PC-3 (cell line): ENCODE measurements at regions of chr1 and their contacts with region 1.

Region 1: DNA sequence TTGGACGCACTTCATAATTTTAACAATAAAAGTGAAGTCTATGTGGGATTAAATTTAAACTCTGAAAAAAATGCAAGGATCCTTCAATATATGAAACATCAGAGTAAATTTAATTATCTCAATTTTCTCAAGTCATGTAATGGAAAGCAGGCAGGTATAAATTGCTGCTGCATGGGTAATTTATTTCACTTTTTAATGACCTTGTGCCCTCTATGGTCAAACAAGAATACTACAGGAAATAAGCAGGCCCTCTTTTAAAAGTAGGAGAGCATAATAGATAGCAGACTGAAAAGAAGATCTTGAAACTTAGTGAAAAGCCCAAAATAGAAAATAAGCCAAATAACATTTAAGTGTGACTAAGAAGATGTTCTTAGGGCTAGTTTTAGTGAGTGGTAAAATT is 22.9 kb downstream of the BCAS2 start:
- DNase-seq: peak; percentile 29
- ATAC-seq: peak; percentile 38; the same call in 1 of the 2 replicates
- H3K4me3 ChIP-seq: no peak overlapping the region
- H3K27ac ChIP-seq: no peak overlapping the region
- H3K4me1 ChIP-seq: no peaks in the 10 kb centered on the region
- H3K27me3 ChIP-seq: no peaks in the 10 kb centered on the region
- CTCF ChIP-seq: peak; percentile 63

Region 2: DNA sequence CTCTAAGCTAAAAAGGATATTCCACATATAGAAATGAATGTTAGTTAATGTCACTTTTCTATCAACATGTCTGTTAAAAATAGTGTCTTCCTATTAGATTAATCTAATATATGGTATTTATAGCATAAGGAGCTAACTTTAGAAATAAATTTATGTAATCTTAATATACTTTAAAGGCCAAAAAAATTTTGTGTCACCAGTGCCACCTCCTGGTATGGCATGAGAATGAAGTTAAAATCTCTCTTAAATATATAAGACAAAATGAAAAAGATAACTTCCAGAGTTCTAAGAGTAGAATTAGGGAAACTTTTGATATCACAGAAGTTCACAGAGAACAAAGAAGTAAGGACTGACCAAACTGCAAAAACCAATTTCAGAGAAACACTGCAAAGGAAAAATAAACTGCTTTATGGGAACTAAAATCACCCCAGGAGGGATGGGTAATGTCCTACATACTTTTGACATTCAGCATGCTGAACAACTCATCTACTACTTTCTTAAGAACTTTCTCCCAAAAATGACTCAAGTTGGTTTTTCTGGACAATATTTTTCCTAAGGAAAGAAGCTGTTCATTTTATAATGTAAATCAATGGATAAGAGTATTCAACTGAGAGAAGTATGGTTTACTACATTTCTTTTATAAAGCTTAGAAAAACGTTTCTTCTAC is 130.3 kb before region 1 on chr1:
- CTCF ChIA-PET with region 1: interaction called, 3 read pairs
- POLR2A ChIA-PET with region 1: no interaction called
- intact Hi-C with region 1: loop called (anchors 5 kb)
- DNase-seq: peak; percentile 38
- ATAC-seq: no peak; the same call in 1 of the 2 replicates
- H3K4me3 ChIP-seq: no peak overlapping the region
- H3K27ac ChIP-seq: no peak overlapping the region
- H3K4me1 ChIP-seq: no peaks in the 10 kb centered on the region
- H3K27me3 ChIP-seq: no peaks in the 10 kb centered on the region
- CTCF ChIP-seq: peak; percentile 65

Region 3: GRCh38 chr1:114467488-114467887 is 91.1 kb before region 1 on chr1:
- CTCF ChIA-PET with region 1: no interaction called
- POLR2A ChIA-PET with region 1: no interaction called
- intact Hi-C with region 1: loop called (anchors 10 kb)
- DNase-seq: no peak
- ATAC-seq: no peak
- H3K4me3 ChIP-seq: no peak overlapping the region
- H3K27ac ChIP-seq: no peak overlapping the region
- H3K4me1 ChIP-seq: peaks cover 22% of the 10 kb centered on the region
- H3K27me3 ChIP-seq: no peaks in the 10 kb centered on the region
- CTCF ChIP-seq: no peak

Region 4: GRCh38 chr1:114540202-114540601 is 18.3 kb before region 1 on chr1:
- CTCF ChIA-PET with region 1: no interaction called
- POLR2A ChIA-PET with region 1: no interaction called
- intact Hi-C with region 1: no loop called
- DNase-seq: peak; percentile 35
- ATAC-seq: peak; percentile 68
- H3K4me3 ChIP-seq: no peak overlapping the region
- H3K27ac ChIP-seq: no peak overlapping the region
- H3K4me1 ChIP-seq: peaks cover 8% of the 10 kb centered on the region; the same call in 1 of the 2 replicates
- H3K27me3 ChIP-seq: no peaks in the 10 kb centered on the region
- CTCF ChIP-seq: no peak